Dendritic cell treated with granulocyte-macrophage colony-stimulating factor and Interleukin-4, amounts not matched to agents 40 ng/mL and 50 ng/mL, for 4 days (primary cell): ENCODE measurements at regions of chr6 and their contacts with region 1.

Region 1: DNA sequence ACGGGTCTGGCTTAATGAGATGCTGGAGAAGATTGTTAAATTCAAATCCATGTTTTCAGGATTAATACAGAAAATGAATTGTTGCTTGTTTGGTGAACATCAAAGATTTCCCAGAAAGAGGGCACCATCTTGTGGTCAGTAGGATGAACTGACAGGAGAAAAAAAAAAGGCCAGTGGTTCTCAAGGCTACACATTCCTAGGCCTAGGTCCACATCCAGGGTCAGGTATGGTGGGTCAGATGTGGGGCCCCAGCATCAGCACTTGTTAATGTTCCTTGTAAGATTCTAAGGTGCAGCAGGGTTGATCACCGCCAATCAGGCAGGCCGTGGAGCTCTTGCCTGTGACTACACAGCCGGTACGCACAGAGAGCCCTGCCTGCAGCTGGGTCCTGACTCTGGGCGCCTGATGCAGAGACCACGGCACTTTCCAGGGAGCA is 34.0 kb upstream of the FOXO3 start:
- H3K4me3 Mint-ChIP-seq: no peak overlapping the region
- H3K27ac Mint-ChIP-seq: no peak overlapping the region
- H3K4me1 Mint-ChIP-seq: no peaks in the 10 kb centered on the region
- H3K27me3 Mint-ChIP-seq: no peaks in the 10 kb centered on the region

Region 2: DNA sequence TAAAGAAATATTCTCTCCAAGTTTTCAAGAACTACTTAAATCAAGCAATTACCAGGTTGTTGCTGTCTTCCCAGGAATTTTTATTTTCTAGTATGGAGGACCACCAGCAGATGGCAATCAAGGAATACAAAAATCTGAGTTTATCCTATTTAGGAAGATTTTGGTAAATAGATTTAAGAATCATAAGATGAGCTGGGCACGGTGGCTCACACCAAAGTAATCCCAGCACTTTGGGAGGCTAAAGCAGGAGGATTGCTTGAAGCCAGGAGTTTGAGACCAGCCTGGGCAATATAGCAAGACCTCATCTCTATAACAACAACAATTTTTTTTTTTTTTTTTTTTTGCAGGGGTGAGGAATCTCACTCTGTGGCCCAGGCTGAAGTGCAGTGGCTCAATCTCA is 549.5 kb before region 1 on chr6:
- intact Hi-C with region 1: loop called (anchors 1 kb)
- H3K4me3 Mint-ChIP-seq: no peak overlapping the region
- H3K27ac Mint-ChIP-seq: no peak overlapping the region
- H3K4me1 Mint-ChIP-seq: peaks cover 8% of the 10 kb centered on the region
- H3K27me3 Mint-ChIP-seq: peaks cover 8% of the 10 kb centered on the region

Region 3: GRCh38 chr6:108578595-108579327 is 52.0 kb after region 1 on chr6:
- intact Hi-C with region 1: no loop called
- H3K4me3 Mint-ChIP-seq: no peak overlapping the region
- H3K27ac Mint-ChIP-seq: no peak overlapping the region
- H3K4me1 Mint-ChIP-seq: peaks cover 80% of the 10 kb centered on the region
- H3K27me3 Mint-ChIP-seq: no peaks in the 10 kb centered on the region